AG04449 (cell line): ENCODE measurements at regions of chr9 and their contacts with region 1.

Region 1: GRCh38 chr9:132651254-132651653 is 18.5 kb downstream of the DDX31 start:
- DNase-seq: no peak
- H3K4me3 ChIP-seq: no peak overlapping the region
- CTCF ChIP-seq: peak; percentile 69

Region 2: GRCh38 chr9:132507746-132508469 is 143.3 kb before region 1 on chr9:
- CTCF ChIA-PET with region 1: interaction called, 54 read pairs
- POLR2A ChIA-PET with region 1: no interaction called
- DNase-seq: no peak
- H3K4me3 ChIP-seq: no peak overlapping the region
- CTCF ChIP-seq: peak; percentile 83

Region 3: GRCh38 chr9:132663851-132664250 is 12.6 kb after region 1 on chr9:
- CTCF ChIA-PET with region 1: interaction called, 27 read pairs
- POLR2A ChIA-PET with region 1: interaction called, 3 read pairs
- DNase-seq: no peak
- H3K4me3 ChIP-seq: no peak overlapping the region
- CTCF ChIP-seq: no peak

Region 4: DNA sequence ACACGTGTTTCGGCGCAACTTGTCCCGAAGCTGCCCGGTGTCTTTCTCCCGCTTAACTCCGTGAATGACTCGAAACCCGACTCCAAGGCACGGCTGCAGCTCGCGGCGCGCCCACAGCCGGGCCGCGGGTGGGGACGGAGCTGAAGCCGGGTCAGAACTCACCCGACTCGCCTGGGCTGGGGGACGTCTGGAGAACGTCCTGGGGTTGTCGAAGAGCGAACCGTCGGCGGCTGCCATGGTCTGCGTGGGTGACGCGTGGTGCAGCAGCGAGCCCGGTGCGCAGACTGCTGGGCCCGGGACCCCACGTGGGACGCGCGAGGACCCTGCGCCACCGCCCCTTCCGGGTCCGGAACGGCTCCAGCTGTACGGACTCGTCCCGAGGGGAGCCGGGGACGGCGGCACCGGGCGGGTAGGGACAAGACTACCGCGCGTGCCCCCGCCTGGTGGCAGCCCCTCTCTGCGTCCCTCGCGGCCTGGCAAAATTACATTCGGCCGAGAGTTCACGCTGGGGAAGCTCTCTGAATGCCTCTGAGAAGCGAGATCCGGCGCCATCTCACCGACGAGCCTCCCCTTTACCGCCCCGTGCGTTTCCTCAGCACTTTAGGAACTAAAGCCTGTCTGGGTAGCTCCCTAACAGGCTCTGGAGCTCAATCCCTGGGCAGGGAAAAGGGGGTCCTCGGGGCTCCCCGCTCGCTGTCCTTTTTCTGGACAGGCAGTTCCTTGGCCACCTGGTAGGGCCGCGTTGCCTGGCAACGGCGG is 18.6 kb after region 1 on chr9 and contains the start of gene DDX31:
- CTCF ChIA-PET with region 1: interaction called, 27 read pairs
- POLR2A ChIA-PET with region 1: interaction called, 11 read pairs
- DNase-seq: no peak
- H3K4me3 ChIP-seq: peak within 1 kb of the TSS; percentile 98
- CTCF ChIP-seq: no peak

Region 5: DNA sequence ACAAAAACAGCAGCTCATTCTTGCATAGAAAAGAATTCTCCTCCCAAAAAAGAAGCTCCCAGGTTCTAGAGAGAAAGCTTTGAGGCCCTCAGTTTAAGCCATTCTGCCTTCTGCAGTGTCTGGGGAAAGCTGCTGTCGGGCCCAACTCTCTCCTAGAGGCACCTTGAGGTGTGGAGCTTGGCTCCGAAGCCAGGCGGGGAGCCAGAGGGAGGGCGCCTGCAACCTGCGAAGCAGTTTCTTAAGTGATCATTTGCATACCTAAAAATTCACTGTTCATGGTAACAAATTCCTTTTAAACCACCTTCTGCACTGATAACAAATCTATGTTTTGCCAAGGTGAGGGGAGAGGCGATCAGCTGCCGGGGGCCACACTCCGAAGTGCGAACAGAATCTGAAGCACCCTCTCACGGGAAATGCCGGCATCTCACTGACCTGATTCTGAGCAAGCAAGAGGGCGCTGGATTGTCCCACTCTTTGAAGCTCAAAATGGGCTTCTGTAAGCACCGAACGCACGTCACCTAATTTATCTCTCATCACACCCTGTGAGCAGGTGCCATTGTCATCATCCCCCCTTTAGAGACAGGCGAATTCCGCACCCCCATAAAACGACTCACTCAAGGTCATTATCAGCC is 105.1 kb after region 1 on chr9:
- CTCF ChIA-PET with region 1: no interaction called
- POLR2A ChIA-PET with region 1: no interaction called
- DNase-seq: no peak
- H3K4me3 ChIP-seq: no peak overlapping the region
- CTCF ChIP-seq: no peak